MCF 10A (cell line): ENCODE measurements at regions of chr17 and their contacts with region 1.

Region 1: GRCh38 chr17:8248751-8249607 is at the start of gene PFAS:
- DNase-seq: peak; percentile 92
- H3K4me3 Mint-ChIP-seq: peak within 1 kb of the TSS; percentile 98
- H3K27ac Mint-ChIP-seq: peak within 1 kb of the TSS; percentile 97
- H3K4me1 Mint-ChIP-seq: peaks cover 15% of the 10 kb centered on the region
- H3K27me3 Mint-ChIP-seq: no peaks in the 10 kb centered on the region
- CTCF ChIP-seq: no peak
- total RNA-seq, gene PFAS: 54.4 and 66.2 TPM in 2 replicates

Region 2: GRCh38 chr17:8016632-8017478 is 232.1 kb before region 1 on chr17:
- CTCF ChIA-PET with region 1: no interaction called
- POLR2A ChIA-PET with region 1: interaction called, 10 read pairs
- intact Hi-C with region 1: no loop called
- DNase-seq: peak; percentile 87
- H3K4me3 Mint-ChIP-seq: peak overlapping the region; percentile 51
- H3K27ac Mint-ChIP-seq: peak overlapping the region; percentile 95
- H3K4me1 Mint-ChIP-seq: peaks cover 44% of the 10 kb centered on the region
- H3K27me3 Mint-ChIP-seq: no peaks in the 10 kb centered on the region
- CTCF ChIP-seq: peak; percentile 90

Region 3: GRCh38 chr17:8189711-8190477 is 59.1 kb before region 1 on chr17 and contains the start of gene BORCS6:
- CTCF ChIA-PET with region 1: no interaction called
- POLR2A ChIA-PET with region 1: interaction called, 54 read pairs
- intact Hi-C with region 1: loop called (anchors 1 kb)
- DNase-seq: peak; percentile 99
- H3K4me3 Mint-ChIP-seq: no peak within 1 kb of the TSS
- H3K27ac Mint-ChIP-seq: peak within 1 kb of the TSS; percentile 59
- H3K4me1 Mint-ChIP-seq: no peaks in the 10 kb centered on the region
- H3K27me3 Mint-ChIP-seq: no peaks in the 10 kb centered on the region
- CTCF ChIP-seq: no peak
- total RNA-seq, gene BORCS6: 3.9 and 4.4 TPM in 2 replicates

Region 4: GRCh38 chr17:8237175-8237574 is 11.8 kb before region 1 on chr17:
- CTCF ChIA-PET with region 1: interaction called, 3 read pairs
- POLR2A ChIA-PET with region 1: interaction called, 15 read pairs
- intact Hi-C with region 1: no loop called
- DNase-seq: no peak
- H3K4me3 Mint-ChIP-seq: no peak overlapping the region
- H3K27ac Mint-ChIP-seq: no peak overlapping the region
- H3K4me1 Mint-ChIP-seq: peaks cover 5% of the 10 kb centered on the region
- H3K27me3 Mint-ChIP-seq: no peaks in the 10 kb centered on the region
- CTCF ChIP-seq: no peak

Region 5: GRCh38 chr17:8294814-8295316 is 45.9 kb after region 1 on chr17:
- CTCF ChIA-PET with region 1: interaction called, 4 read pairs
- POLR2A ChIA-PET with region 1: interaction called, 52 read pairs
- intact Hi-C with region 1: loop called (anchors 2 kb)
- DNase-seq: no peak
- H3K4me3 Mint-ChIP-seq: peak overlapping the region; percentile 92
- H3K27ac Mint-ChIP-seq: peak overlapping the region; percentile 91
- H3K4me1 Mint-ChIP-seq: peaks cover 21% of the 10 kb centered on the region
- H3K27me3 Mint-ChIP-seq: no peaks in the 10 kb centered on the region
- CTCF ChIP-seq: no peak

Region 6: DNA sequence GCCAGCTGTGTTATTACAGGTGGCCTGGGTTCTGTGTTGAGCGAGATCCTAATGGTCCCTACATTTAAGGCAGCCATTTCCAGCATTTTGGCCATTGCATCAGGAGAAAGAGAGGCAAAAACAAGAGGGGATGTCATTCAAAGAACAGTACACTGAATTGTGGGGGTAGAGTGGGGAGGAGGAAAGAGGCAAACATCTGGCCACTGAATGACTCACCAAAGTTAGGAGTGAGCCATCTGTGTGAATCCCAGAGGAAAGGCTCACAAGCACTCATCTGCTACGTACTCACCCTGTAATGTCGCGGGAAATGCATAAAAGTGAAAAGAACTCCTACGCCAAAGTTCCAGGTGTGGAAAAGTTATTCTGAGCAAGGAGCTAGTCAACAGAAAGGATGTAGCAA is 110.8 kb after region 1 on chr17:
- CTCF ChIA-PET with region 1: no interaction called
- POLR2A ChIA-PET with region 1: no interaction called
- intact Hi-C with region 1: no loop called
- DNase-seq: peak; percentile 78
- H3K4me3 Mint-ChIP-seq: no peak overlapping the region
- H3K27ac Mint-ChIP-seq: peak overlapping the region; percentile 17
- H3K4me1 Mint-ChIP-seq: peaks cover 10% of the 10 kb centered on the region
- H3K27me3 Mint-ChIP-seq: no peaks in the 10 kb centered on the region
- CTCF ChIP-seq: no peak

Region 7: GRCh38 chr17:8376271-8377067 is 127.5 kb after region 1 on chr17 and contains the start of gene KRABD2:
- CTCF ChIA-PET with region 1: no interaction called
- POLR2A ChIA-PET with region 1: interaction called, 17 read pairs
- intact Hi-C with region 1: no loop called
- DNase-seq: peak; percentile 86
- H3K4me3 Mint-ChIP-seq: peak within 1 kb of the TSS; percentile 76
- H3K27ac Mint-ChIP-seq: peak within 1 kb of the TSS; percentile 64
- H3K4me1 Mint-ChIP-seq: peaks cover 26% of the 10 kb centered on the region
- H3K27me3 Mint-ChIP-seq: no peaks in the 10 kb centered on the region
- CTCF ChIP-seq: peak; percentile 40